Posterior vena cava (tissue), 2 donors: ENCODE measurements at regions of chr13 and their contacts with region 1.

Region 1: DNA sequence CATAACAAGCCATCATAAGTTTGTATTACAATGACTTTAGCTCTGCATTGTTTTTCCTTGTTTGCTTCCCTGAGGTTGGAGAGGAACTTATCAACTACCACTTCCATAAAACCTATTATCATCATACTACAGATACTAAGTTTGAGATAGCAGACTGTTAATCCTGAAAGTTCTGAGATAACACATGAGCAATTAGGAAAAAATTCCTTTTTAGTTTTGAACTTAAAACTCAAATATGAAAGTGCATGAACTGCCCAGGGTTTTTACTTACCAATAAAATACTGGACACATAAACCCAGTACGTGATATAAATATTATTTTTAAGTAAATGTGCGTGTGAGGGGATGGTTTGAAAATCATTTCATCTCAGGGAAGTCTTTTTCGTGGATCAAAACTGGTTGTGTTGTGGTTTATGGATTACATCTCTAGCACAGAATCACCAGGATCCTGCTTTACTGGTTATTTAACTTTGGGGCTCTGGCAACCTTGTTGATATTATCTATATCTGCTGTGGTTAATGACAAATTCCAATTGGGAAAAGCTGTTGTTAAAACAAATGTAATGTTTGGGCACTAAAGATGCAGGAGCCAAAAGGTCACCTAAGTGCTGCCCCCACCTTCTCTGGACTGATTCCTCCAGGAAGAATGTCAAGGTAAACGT is 12.4 kb downstream of the CDX2 start:
- DNase-seq: no peak

Region 2: GRCh38 chr13:27988520-27988919 is 31.8 kb after region 1 on chr13 and contains the start of gene URAD:
- intact Hi-C with region 1: loop called in 1 of 2 experiments (anchors 1 kb)
- DNase-seq: no peak
- total RNA-seq, gene URAD: not detected